MCF 10A (cell line): ENCODE measurements at regions of chr15 and their contacts with region 1.

Region 1: DNA sequence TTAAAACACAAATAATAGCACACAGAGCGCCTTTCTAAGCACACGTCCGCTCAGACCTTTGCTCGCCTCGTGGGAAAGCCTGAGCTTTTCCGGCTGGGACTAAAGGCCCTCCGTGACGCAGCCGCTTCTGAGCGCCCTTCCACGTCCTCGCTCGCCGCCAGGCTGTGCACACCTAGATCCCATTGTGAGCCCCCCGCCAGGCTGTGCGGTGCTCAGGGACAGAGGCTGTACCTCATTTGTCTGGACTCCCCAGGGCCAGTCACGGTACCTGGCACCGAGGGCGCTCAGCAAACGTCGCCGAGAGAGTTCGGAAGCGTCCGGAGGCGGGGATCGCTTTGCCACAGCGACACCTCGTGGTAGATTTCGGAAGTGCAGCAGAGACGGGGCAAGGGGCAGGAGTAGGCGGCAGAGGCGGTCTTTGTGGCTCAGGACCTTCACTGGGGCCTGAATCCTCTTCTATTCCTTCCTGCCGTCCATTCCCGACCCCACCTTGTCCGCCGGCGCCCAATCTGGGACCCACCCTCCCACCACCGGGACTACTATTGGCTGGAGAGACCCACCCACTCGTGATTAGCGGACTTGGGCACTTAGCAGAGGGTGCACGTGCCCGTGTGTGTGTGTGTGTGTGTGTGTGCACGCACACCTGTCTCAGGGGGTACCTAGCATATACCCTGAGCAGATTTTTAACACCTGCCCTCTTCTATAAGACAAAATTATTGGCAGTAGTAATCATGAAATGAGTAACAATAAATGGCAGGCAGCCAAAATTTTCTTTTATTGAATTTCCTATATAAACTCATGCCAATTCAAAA is 65.6 kb downstream of the RHCG start:
- DNase-seq: peak; percentile 59
- H3K4me3 Mint-ChIP-seq: peak overlapping the region; percentile 51
- H3K27ac Mint-ChIP-seq: no peak overlapping the region
- H3K4me1 Mint-ChIP-seq: peaks cover 4% of the 10 kb centered on the region
- H3K27me3 Mint-ChIP-seq: no peaks in the 10 kb centered on the region
- CTCF ChIP-seq: peak; percentile 98

Region 2: GRCh38 chr15:89378296-89379151 is 52.2 kb before region 1 on chr15:
- CTCF ChIA-PET with region 1: interaction called, 11 read pairs
- POLR2A ChIA-PET with region 1: no interaction called
- intact Hi-C with region 1: no loop called
- DNase-seq: no peak
- H3K4me3 Mint-ChIP-seq: no peak overlapping the region
- H3K27ac Mint-ChIP-seq: no peak overlapping the region
- H3K4me1 Mint-ChIP-seq: no peaks in the 10 kb centered on the region
- H3K27me3 Mint-ChIP-seq: peaks cover 79% of the 10 kb centered on the region
- CTCF ChIP-seq: no peak

Region 3: DNA sequence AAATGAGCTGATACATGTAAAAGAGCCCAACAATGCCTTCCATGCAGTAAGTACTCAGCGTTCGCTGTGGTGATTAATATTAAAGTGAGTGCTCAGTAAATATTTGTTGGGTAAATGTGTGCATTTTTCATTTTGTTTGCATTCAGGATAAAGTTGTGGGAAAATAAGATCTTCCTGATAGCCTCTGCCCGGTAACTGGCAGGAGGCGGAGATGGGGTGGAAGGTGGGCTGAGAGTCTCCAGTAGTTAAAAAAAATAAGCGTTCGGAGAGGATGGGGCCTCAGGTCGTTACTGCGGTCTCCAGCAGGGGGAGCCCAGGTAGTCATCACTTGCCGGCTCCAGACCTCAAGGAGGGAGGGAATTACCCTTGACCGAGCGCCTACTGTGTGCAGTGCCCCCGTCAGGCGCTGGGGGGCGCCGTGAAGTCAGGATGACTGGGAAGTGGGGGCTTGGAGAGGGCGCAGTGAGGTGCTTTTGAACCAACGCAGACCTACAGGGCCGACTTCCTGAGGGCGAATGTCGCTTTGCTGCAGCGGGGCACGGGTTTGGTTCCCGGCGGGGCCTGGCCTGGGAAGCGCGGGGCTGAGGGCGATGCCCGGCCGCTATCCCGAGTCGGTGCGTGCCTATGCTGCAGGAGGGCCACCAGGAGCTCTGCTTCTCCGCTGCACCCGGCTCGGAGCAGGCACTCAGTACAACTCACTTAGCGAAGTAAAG is 14.4 kb before region 1 on chr15:
- CTCF ChIA-PET with region 1: interaction called, 24 read pairs
- POLR2A ChIA-PET with region 1: no interaction called
- intact Hi-C with region 1: no loop called
- DNase-seq: peak; percentile 73
- H3K4me3 Mint-ChIP-seq: no peak overlapping the region
- H3K27ac Mint-ChIP-seq: no peak overlapping the region
- H3K4me1 Mint-ChIP-seq: no peaks in the 10 kb centered on the region
- H3K27me3 Mint-ChIP-seq: peaks cover 82% of the 10 kb centered on the region
- CTCF ChIP-seq: peak; percentile 92

Region 4: GRCh38 chr15:89442671-89443307 is 12.1 kb after region 1 on chr15:
- CTCF ChIA-PET with region 1: interaction called, 12 read pairs
- POLR2A ChIA-PET with region 1: interaction called, 3 read pairs
- intact Hi-C with region 1: no loop called
- DNase-seq: peak; percentile 70
- H3K4me3 Mint-ChIP-seq: no peak overlapping the region
- H3K27ac Mint-ChIP-seq: no peak overlapping the region
- H3K4me1 Mint-ChIP-seq: no peaks in the 10 kb centered on the region
- H3K27me3 Mint-ChIP-seq: peaks cover 25% of the 10 kb centered on the region
- CTCF ChIP-seq: peak; percentile 75

Region 5: GRCh38 chr15:89472785-89473256 is 42.1 kb after region 1 on chr15:
- CTCF ChIA-PET with region 1: interaction called, 4 read pairs
- POLR2A ChIA-PET with region 1: no interaction called
- intact Hi-C with region 1: loop called (anchors 5 kb)
- DNase-seq: peak; percentile 67
- H3K4me3 Mint-ChIP-seq: no peak overlapping the region
- H3K27ac Mint-ChIP-seq: no peak overlapping the region
- H3K4me1 Mint-ChIP-seq: no peaks in the 10 kb centered on the region
- H3K27me3 Mint-ChIP-seq: peaks cover 46% of the 10 kb centered on the region
- CTCF ChIP-seq: peak; percentile 88